H1 (cell line): ENCODE measurements at regions of chr16 and their contacts with region 1.

Region 1: DNA sequence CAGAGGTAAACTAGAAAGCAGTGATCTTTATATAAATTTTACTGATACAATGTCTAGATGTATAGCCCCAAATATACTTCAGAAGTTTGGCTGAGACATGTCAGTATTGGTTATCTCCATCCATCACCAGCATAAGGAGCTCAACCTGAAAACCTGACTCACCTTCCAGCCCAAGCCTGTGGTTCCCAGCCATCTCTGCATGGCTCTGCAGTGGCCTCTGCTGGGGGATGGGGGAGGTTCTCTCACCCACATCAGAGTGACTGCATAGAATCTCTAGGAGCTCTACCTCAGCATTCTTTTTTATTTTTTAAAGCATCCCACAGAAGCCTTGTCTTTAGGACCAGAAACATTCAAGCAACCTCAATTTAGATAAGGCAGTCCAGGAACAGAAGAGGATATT is 27.3 kb downstream of the USP7 start:
- DNase-seq: peak in 1 of 2 experiments; percentile 39
- H3K4me3 ChIP-seq: no peak overlapping the region
- H3K27ac ChIP-seq: no peak overlapping the region
- H3K4me1 ChIP-seq: peaks cover 3 to 10% (median 6%) of the 10 kb centered on the region in 4 experiments
- H3K27me3 ChIP-seq: no peaks in the 10 kb centered on the region
- CTCF ChIP-seq: peak; percentile 76 to 77 (median 77)
- EP300 ChIP-seq: no peak
- POLR2A ChIP-seq: no peak
- RAD21 ChIP-seq: peak; percentile 60 to 74

Region 2: DNA sequence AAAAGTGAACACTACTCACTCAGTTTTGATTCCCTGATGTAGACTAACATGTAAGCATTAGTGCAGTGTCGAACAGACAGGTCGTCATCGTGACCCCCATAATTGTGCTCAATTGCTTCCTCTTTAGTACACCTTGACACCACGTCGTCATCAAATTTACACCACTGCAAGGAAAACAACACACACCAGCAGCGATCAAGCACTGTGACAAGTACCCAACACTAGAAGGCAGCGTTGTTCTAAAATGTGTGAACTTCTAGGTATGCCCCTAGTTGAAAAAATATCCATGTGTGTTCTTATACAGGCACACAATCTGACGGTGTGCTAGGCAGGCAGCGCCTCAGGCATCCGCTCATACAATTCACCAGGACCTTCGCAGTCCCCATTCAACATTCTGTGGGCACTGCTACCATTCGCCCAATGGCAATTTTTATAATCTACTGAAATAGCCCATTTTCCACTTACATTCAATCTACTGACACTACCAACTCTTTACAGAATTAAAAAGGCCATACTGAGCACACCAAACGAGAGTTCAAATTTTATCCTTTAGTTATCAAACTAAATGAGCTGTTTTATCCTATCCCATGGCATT is 31.2 kb before region 1 on chr16:
- CTCF ChIA-PET with region 1: interaction called, 11 read pairs
- POLR2A ChIA-PET with region 1: no interaction called
- DNase-seq: no peak
- H3K4me3 ChIP-seq: no peak overlapping the region
- H3K27ac ChIP-seq: no peak overlapping the region
- H3K4me1 ChIP-seq: no peaks in the 10 kb centered on the region
- H3K27me3 ChIP-seq: no peaks in the 10 kb centered on the region
- CTCF ChIP-seq: peak; percentile 9 to 72 (median 63)
- EP300 ChIP-seq: no peak
- POLR2A ChIP-seq: no peak
- RAD21 ChIP-seq: peak; percentile 67 to 73

Region 3: DNA sequence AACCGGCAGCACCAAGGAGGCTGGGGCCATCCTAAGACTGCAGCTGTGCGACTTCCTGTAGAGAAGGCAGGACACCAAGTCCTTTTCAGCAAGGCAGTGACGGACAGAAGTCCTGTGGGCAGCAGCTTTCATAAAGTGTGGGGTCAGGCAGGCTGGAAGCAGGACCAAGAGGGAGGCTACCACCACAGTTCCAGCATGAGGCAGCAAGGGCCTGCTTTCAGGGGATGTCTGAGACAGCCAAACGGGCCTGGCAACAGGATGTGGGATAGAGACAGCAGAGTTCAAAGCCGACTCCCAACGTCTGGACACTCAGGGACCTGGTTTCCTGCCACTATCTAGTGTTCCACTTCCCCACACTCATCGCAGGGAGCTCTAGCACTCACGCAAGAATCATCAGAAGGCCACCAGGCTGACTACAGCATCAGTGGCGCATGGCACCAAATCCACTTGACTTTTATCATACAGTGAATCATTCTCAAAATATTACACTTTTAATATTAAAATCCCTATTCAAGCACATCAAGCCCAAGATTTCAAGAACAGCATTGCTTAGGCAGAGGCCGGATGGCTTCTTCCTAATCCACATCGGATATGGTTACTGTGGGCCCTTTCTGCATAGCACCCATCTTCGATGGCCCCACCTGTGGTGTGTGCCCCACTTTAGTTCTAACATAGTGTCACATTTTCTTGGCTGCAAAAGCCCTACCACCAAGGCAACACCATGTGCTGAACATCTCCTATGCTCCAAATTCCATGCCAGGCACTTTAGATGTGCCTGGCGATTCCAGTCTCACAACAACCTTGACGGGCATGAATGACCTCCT is 22.1 kb after region 1 on chr16:
- CTCF ChIA-PET with region 1: interaction called, 24 read pairs
- POLR2A ChIA-PET with region 1: interaction called, 13 read pairs
- DNase-seq: no peak
- H3K4me3 ChIP-seq: no peak overlapping the region
- H3K27ac ChIP-seq: no peak overlapping the region
- H3K4me1 ChIP-seq: peaks cover 24 to 39% (median 34%) of the 10 kb centered on the region in 4 experiments
- H3K27me3 ChIP-seq: no peaks in the 10 kb centered on the region
- CTCF ChIP-seq: no peak
- EP300 ChIP-seq: no peak
- POLR2A ChIP-seq: no peak
- RAD21 ChIP-seq: no peak

Region 4: DNA sequence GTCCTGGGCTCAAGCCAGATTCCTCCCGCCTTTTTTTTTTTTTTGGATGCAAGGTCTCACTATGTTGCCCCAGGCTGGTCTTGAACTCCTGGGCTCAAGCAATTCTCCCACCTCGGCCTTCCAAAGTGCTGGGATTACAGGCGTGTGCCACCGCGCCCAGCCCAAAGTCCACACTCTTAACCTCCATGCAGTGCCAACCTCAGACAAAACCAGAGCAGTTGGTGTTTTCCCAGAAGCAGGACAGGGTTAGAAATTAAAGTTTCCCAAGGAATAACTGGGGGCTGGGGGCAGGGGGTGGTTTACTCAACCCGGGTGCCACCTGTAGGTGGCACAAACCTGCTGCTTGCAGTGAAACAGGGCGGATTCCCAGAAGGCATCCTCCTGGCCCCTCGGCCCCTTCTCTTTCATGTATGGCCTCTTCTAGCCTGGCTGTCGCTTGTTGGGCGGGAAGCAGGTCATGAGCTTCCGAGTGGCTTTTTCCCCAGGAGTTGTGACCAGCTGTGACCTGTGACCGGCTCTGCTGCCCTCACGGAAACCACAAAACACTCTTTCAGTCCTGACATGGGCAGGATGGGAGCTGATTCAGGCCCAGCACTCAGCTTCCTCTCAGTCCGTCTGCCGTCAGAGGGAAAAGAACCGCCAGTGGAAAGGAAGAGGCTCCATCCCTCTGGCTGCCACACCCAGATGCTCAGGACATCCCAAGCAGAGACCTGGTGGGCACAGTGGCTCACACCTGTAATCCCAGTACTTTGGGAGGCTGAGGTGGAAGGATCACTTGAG is 52.9 kb after region 1 on chr16:
- CTCF ChIA-PET with region 1: interaction called, 16 read pairs
- POLR2A ChIA-PET with region 1: interaction called, 4 read pairs
- DNase-seq: no peak
- H3K4me3 ChIP-seq: no peak overlapping the region
- H3K27ac ChIP-seq: no peak overlapping the region
- H3K4me1 ChIP-seq: peaks cover 0 to 4% (median 3%) of the 10 kb centered on the region in 4 experiments; a peak in 4 of 7 replicates
- H3K27me3 ChIP-seq: no peaks in the 10 kb centered on the region; a peak in 1 of 7 replicates
- CTCF ChIP-seq: no peak
- EP300 ChIP-seq: no peak
- POLR2A ChIP-seq: no peak
- RAD21 ChIP-seq: no peak

Region 5: GRCh38 chr16:9033125-9033830 is 96.9 kb after region 1 on chr16:
- CTCF ChIA-PET with region 1: interaction called, 15 read pairs
- POLR2A ChIA-PET with region 1: interaction called, 3 read pairs
- DNase-seq: peak in 1 of 2 experiments; percentile 70
- H3K4me3 ChIP-seq: no peak overlapping the region
- H3K27ac ChIP-seq: no peak overlapping the region
- H3K4me1 ChIP-seq: no peaks in the 10 kb centered on the region
- H3K27me3 ChIP-seq: no peaks in the 10 kb centered on the region
- CTCF ChIP-seq: peak; percentile 33 to 77 (median 72)
- EP300 ChIP-seq: no peak
- POLR2A ChIP-seq: no peak
- RAD21 ChIP-seq: peak; percentile 56 to 66

Region 6: DNA sequence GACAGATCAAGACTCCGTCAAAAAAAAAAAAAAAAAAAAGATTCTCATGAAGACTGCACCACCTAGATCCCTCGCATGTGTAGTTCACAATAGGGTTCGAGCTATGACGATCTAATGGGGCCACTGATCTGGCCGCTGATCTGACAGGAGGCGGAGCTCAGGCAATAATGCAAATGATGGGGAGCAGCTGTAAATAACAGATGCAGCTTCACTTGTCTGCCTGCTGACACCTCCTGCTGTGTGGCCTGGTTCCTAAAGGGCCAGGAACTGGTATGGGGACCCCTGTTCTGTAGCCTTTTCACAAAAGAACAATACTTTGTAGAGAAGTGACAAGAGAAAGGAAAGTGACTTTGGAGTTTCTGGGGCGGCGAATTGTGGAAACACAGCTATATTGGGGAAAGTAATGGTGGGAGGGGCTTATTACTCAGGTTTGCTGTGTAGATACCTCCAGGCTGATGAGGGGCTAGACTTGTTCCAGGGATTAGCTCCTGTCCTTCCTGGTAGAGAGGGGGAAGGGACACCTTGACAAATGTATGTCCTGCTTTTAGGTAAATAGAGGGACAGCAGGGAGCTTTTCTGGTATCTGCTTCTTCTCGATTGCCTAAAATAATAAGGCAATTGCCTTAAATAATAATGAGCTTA is 212.1 kb after region 1 on chr16:
- CTCF ChIA-PET with region 1: no interaction called
- POLR2A ChIA-PET with region 1: no interaction called
- DNase-seq: no peak
- H3K4me3 ChIP-seq: no peak overlapping the region
- H3K27ac ChIP-seq: no peak overlapping the region
- H3K4me1 ChIP-seq: peaks cover 7 to 24% (median 14%) of the 10 kb centered on the region in 4 experiments; a peak in 6 of 7 replicates
- H3K27me3 ChIP-seq: no peaks in the 10 kb centered on the region
- CTCF ChIP-seq: no peak
- EP300 ChIP-seq: no peak
- POLR2A ChIP-seq: no peak
- RAD21 ChIP-seq: no peak